ENCODE measurements at regions of chr13 and their contacts with region 1.

Region 1: GRCh38 chr13:97855570-97856303 is 97.7 kb upstream of the IPO5 start:
- DNase-seq: peak; percentile 48 to 60
- ATAC-seq: peak; percentile 70 to 92 (median 86)
- H3K4me3 ChIP-seq: no peak overlapping the region
- H3K27ac ChIP-seq: peak overlapping the region in 2 of 10 donors; percentile 5 to 24
- H3K4me1 ChIP-seq: peaks cover 0 to 10% (median 4%) of the 10 kb centered on the region in 9 donors
- H3K27me3 ChIP-seq: no peaks in the 10 kb centered on the region
- CTCF ChIP-seq: peak; percentile 76 to 95 (median 84)

Region 2: GRCh38 chr13:97686594-97686993 is 169.1 kb before region 1 on chr13:
- intact Hi-C with region 1: no loop called
- DNase-seq: no peak
- ATAC-seq: no peak
- H3K4me3 ChIP-seq: no peak overlapping the region
- H3K27ac ChIP-seq: no peak overlapping the region
- H3K4me1 ChIP-seq: no peaks in the 10 kb centered on the region
- H3K27me3 ChIP-seq: peaks cover 0 to 17% (median 0%) of the 10 kb centered on the region in 7 donors
- CTCF ChIP-seq: no peak

Region 3: DNA sequence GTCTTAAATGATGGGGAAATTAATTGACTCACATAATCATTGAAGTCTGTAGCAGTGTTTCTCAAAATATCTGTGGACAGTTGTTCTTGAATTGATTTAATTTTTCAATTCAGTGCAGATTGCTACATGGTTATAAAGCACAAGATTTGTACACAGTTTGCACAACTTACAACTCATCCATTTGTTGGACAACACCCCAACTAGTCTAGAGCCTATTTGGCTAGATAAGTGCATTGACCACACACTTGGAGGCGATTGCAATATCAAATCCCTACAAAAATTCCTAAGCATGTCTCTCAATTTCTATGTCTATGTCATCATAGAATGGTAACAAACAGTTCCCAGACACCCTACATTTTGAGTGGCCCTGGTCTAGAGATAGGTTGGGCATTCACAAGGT is 49.8 kb after region 1 on chr13:
- intact Hi-C with region 1: loop called in 4 of 10 experiments (anchors 2 to 5 kb)
- DNase-seq: no peak
- ATAC-seq: no peak
- H3K4me3 ChIP-seq: no peak overlapping the region
- H3K27ac ChIP-seq: no peak overlapping the region
- H3K4me1 ChIP-seq: peaks cover 0 to 7% (median 0%) of the 10 kb centered on the region in 9 donors
- H3K27me3 ChIP-seq: no peaks in the 10 kb centered on the region
- CTCF ChIP-seq: no peak

Region 4: DNA sequence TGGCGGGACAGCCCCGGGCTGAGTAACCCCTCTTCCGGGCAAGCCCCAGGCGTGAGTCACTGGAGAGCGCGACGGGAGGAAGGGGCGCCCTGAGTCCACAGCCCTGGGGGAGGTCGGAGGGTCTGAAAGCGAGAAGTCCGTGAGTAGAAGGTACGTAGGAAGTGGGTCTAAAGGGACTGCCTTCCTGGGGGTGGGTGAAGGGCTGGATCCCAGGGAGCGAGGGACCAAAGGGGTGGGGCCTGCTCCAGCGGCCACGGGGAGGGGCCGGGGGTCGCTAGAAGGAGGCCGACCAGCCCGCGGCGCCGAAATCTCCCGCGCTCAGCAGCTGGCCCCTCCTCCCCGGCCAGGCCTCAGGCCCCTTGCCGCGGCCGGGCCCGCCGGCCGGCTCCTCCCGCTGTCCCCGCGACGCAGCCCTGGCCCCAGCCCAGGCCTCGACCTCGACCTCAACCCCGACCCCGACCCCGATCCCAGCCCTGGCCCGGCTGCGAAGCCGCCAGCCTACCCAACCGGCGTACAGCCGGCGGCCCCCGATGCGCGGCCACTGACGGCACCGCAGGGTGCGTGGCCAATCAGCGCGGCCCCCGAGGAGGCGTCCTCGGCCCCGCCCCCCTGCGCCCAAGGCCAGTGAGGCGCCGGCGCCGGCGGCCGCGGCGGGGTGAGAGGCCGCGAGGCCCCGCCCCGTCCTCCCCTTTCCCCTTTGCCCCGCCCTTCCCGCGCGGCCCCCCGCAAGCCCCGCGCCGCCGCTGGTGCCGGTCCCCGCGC is 120.3 kb after region 1 on chr13:
- intact Hi-C with region 1: loop called (anchors 2 to 10 kb)
- DNase-seq: peak; percentile 88 to 93
- ATAC-seq: peak; percentile 97 to 99 (median 98)
- H3K4me3 ChIP-seq: peak overlapping the region; percentile 39 to 94 (median 85)
- H3K27ac ChIP-seq: peak overlapping the region; percentile 79 to 98 (median 94)
- H3K4me1 ChIP-seq: peaks cover 0 to 38% (median 29%) of the 10 kb centered on the region in 9 donors
- H3K27me3 ChIP-seq: no peaks in the 10 kb centered on the region
- CTCF ChIP-seq: no peak

Region 5: GRCh38 chr13:98429977-98430736 is 574.4 kb after region 1 on chr13:
- intact Hi-C with region 1: loop called in 2 of 10 experiments (anchors 10 kb)
- DNase-seq: no peak
- ATAC-seq: no peak
- H3K4me3 ChIP-seq: no peak overlapping the region
- H3K27ac ChIP-seq: no peak overlapping the region
- H3K4me1 ChIP-seq: peaks cover 0 to 12% (median 0%) of the 10 kb centered on the region in 9 donors
- H3K27me3 ChIP-seq: no peaks in the 10 kb centered on the region
- CTCF ChIP-seq: no peak

Region 6: DNA sequence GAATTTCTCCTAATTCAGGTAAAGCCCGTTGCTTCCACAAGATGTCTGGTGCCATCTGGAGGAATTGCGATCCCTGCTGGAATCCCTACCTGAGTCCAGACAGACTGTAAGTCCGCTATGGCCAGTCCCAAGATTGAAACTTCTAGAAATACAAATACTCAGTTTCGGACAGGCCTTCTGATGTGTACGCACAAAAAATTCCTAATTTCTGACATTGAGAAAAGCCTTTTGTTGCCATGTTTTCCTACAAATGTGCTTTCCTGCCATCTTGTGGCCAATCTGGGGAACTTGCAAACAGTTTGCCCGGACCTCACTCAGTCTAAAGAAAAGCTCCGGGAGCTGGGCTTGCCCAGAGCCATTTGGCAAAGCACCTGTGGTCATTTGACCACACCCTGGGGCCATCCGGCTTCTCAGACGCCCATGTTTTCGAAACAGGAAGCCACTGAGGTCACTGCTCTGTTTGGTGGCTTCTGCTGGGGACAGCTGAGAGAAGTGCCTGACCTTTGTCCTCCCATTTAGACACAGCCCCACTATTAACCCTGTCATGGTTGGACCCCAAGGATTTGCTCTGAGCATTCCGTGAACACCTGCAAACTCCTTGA is 817.3 kb after region 1 on chr13:
- intact Hi-C with region 1: loop called in 8 of 10 experiments (anchors 5 to 10 kb)
- DNase-seq: peak; percentile 45 to 72
- ATAC-seq: peak; percentile 89 to 96 (median 92)
- H3K4me3 ChIP-seq: peak overlapping the region in 1 of 10 donors; percentile 9
- H3K27ac ChIP-seq: peak overlapping the region in 2 of 10 donors; percentile 20 to 29
- H3K4me1 ChIP-seq: peaks cover 0 to 18% (median 11%) of the 10 kb centered on the region in 9 donors
- H3K27me3 ChIP-seq: no peaks in the 10 kb centered on the region
- CTCF ChIP-seq: peak; percentile 75 to 95 (median 88)